Activated B cell treated with CpG ODN at 0.5 μM for 24 hours (primary cell): ENCODE measurements at regions of chr17 and their contacts with region 1.

Region 1: GRCh38 chr17:60435244-60436167 is 13.2 kb downstream of the CHCT1 start:
- DNase-seq: peak; percentile 23
- ATAC-seq: peak; percentile 80
- H3K4me3 Mint-ChIP-seq: no peak overlapping the region
- H3K27ac Mint-ChIP-seq: no peak overlapping the region
- H3K4me1 Mint-ChIP-seq: no peaks in the 10 kb centered on the region
- H3K27me3 Mint-ChIP-seq: peaks cover 5% of the 10 kb centered on the region
- CTCF ChIP-seq: peak; percentile 78

Region 2: DNA sequence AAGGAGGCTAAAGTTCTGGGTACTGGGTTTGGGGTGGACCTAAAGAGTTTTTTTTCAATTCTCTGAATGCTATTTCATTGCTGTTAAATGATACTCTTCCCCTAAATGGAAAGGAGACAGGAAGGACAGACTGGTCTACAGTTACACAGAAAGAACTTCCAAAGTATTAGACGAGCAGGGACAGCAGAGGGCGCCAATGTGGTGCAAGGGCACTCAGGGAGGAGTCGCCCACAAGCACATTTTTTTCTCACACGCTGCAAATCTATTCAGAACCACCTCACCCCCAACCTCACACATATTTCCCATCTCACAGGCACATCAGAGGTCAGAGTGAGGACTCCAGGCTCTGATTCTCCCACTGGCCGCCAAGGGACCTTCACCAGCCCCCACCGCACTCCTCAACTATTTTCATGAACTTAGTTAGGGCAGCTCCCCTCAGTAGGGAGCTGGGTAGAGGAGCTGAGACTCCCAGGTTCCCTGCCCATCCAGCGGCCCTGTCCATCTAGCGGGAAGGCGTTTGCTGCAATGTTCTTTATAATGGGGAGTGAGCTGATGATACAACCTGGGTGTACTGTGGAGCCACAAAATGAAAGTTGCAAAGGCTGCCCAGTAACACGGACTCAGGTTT is 292.5 kb before region 1 on chr17:
- CTCF ChIA-PET with region 1: no interaction called
- POLR2A ChIA-PET with region 1: no interaction called
- intact Hi-C with region 1: loop called (anchors 1 kb)
- DNase-seq: peak; percentile 41
- ATAC-seq: peak; percentile 74
- H3K4me3 Mint-ChIP-seq: no peak overlapping the region
- H3K27ac Mint-ChIP-seq: no peak overlapping the region
- H3K4me1 Mint-ChIP-seq: peaks cover 25% of the 10 kb centered on the region
- H3K27me3 Mint-ChIP-seq: peaks cover 67% of the 10 kb centered on the region
- CTCF ChIP-seq: no peak

Region 3: DNA sequence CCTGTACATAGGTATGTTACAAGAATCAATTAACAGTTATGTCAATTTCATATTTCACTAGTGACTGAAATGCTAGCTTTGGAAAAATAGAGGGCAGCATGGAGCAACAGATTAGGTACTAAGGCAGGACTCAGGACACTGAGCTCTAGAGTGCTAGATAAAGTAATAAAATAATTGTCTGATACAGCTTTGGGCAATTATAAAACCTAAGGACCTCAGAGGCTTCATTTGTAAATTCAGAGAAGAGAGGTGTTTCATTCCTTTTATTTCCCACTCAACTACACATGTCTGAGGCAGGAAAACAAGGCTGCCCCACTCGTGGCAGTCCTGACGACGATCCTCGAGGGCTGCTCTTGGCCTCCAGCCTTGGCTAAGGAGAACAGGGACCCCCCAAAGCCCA is 204.3 kb before region 1 on chr17:
- CTCF ChIA-PET with region 1: interaction called, 3 read pairs
- POLR2A ChIA-PET with region 1: no interaction called
- intact Hi-C with region 1: loop called (anchors 1 kb)
- DNase-seq: no peak
- ATAC-seq: no peak
- H3K4me3 Mint-ChIP-seq: no peak overlapping the region
- H3K27ac Mint-ChIP-seq: no peak overlapping the region
- H3K4me1 Mint-ChIP-seq: no peaks in the 10 kb centered on the region
- H3K27me3 Mint-ChIP-seq: no peaks in the 10 kb centered on the region
- CTCF ChIP-seq: no peak

Region 4: GRCh38 chr17:60321336-60322055 is 114.0 kb before region 1 on chr17:
- CTCF ChIA-PET with region 1: no interaction called
- POLR2A ChIA-PET with region 1: no interaction called
- intact Hi-C with region 1: loop called (anchors 5 kb)
- DNase-seq: no peak
- ATAC-seq: no peak
- H3K4me3 Mint-ChIP-seq: no peak overlapping the region
- H3K27ac Mint-ChIP-seq: no peak overlapping the region
- H3K4me1 Mint-ChIP-seq: peaks cover 18% of the 10 kb centered on the region
- H3K27me3 Mint-ChIP-seq: no peaks in the 10 kb centered on the region
- CTCF ChIP-seq: no peak

Region 5: GRCh38 chr17:60421273-60421934 is 14.1 kb before region 1 on chr17:
- CTCF ChIA-PET with region 1: no interaction called
- POLR2A ChIA-PET with region 1: no interaction called
- intact Hi-C with region 1: loop called (anchors 1 kb)
- DNase-seq: peak; percentile 79
- ATAC-seq: peak; percentile 93
- H3K4me3 Mint-ChIP-seq: peak overlapping the region; percentile 85
- H3K27ac Mint-ChIP-seq: peak overlapping the region; percentile 74
- H3K4me1 Mint-ChIP-seq: peaks cover 8% of the 10 kb centered on the region
- H3K27me3 Mint-ChIP-seq: no peaks in the 10 kb centered on the region
- CTCF ChIP-seq: peak; percentile 100